GM12878 (cell line): ENCODE measurements at regions of chr3 and their contacts with region 1.

Region 1: DNA sequence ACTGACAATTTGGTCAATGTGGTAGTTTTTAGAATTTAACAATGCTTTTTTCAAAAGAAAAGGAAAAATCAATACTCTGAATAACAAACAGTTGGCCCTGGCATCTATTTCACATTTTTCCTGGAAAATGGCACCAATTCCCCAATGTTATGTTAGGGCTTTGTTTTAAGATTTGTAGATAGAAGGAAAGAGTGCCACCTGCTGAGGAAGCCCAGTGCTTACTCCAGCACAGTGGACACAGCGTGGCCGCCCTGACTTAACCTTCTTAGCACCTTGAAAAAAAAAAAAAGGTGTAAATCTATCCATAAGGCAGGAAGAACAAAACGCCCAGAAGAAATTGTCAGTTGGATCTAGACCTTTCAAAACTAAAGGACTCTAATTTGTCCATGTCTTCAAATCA is 110.7 kb upstream of the CNTN4 start:
- DNase-seq: no peak
- ATAC-seq: peak; percentile 70
- H3K4me3 ChIP-seq: no peak overlapping the region
- H3K27ac ChIP-seq: no peak overlapping the region
- H3K4me1 ChIP-seq: no peaks in the 10 kb centered on the region
- H3K27me3 ChIP-seq: no peaks in the 10 kb centered on the region
- CTCF ChIP-seq: peak in 2 of 3 experiments; percentile 25 to 36; a peak in 2 of 6 replicates
- EP300 ChIP-seq: no peak
- POLR2A ChIP-seq: no peak
- RAD21 ChIP-seq: no peak

Region 2: DNA sequence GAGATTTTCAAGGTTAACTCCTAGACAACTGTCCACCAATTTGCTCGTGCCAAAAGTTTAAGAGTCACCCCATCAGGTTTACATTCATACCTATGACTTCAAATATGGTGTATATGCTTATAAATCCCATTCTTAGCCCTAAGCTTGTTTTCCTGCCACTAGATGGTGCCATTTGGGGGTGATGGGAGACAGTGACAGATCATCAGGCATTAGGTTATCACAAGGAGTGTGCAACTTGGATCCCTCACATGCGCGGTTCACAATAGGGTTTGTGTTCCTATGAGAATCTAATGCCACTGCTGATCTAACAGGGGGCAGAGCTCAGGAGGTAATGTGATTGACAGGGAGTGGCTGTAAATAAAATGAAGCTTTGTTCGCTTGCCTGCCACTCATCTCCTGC is 712.5 kb before region 1 on chr3:
- CTCF ChIA-PET with region 1: no interaction called
- POLR2A ChIA-PET with region 1: no interaction called
- RAD21 ChIA-PET with region 1: no interaction called
- SMC1A ChIA-PET with region 1: no interaction called
- in situ Hi-C with region 1: no loop called
- intact Hi-C with region 1: loop called (anchors 10 kb)
- DNase-seq: no peak
- ATAC-seq: peak; percentile 71
- H3K4me3 ChIP-seq: no peak overlapping the region
- H3K27ac ChIP-seq: no peak overlapping the region
- H3K4me1 ChIP-seq: no peaks in the 10 kb centered on the region
- H3K27me3 ChIP-seq: no peaks in the 10 kb centered on the region
- CTCF ChIP-seq: peak; percentile 35 to 53 (median 39); a peak in 4 of 6 replicates
- EP300 ChIP-seq: no peak
- POLR2A ChIP-seq: no peak
- RAD21 ChIP-seq: peak; percentile 46

Region 3: GRCh38 chr3:1561427-1561826 is 426.6 kb before region 1 on chr3:
- CTCF ChIA-PET with region 1: no interaction called
- POLR2A ChIA-PET with region 1: no interaction called
- RAD21 ChIA-PET with region 1: no interaction called
- SMC1A ChIA-PET with region 1: no interaction called
- in situ Hi-C with region 1: no loop called
- intact Hi-C with region 1: no loop called
- DNase-seq: no peak
- ATAC-seq: no peak
- H3K4me3 ChIP-seq: no peak overlapping the region
- H3K27ac ChIP-seq: no peak overlapping the region
- H3K4me1 ChIP-seq: no peaks in the 10 kb centered on the region
- H3K27me3 ChIP-seq: no peaks in the 10 kb centered on the region
- CTCF ChIP-seq: no peak
- EP300 ChIP-seq: no peak
- POLR2A ChIP-seq: no peak
- RAD21 ChIP-seq: no peak

Region 4: DNA sequence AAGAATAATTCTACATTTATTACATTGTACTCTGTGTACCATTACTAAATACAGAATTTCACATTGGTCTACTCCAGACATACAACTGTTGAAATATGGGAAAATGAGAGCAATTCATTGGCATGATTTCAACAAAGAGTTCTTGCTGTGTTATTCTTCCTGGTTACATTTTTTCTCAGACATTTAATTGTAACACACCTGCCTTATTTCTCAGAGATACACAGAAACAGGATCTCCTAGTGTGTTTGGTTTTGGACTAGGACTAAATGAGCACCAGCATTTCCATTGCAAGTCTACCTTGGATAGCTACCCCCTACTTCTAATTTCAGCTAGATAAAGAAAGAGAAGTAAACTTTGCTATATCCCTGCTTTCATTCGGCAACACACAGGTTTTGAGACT is 163.6 kb before region 1 on chr3:
- CTCF ChIA-PET with region 1: no interaction called
- POLR2A ChIA-PET with region 1: no interaction called
- RAD21 ChIA-PET with region 1: no interaction called
- SMC1A ChIA-PET with region 1: no interaction called
- in situ Hi-C with region 1: no loop called
- intact Hi-C with region 1: no loop called
- DNase-seq: no peak
- ATAC-seq: no peak
- H3K4me3 ChIP-seq: no peak overlapping the region
- H3K27ac ChIP-seq: no peak overlapping the region
- H3K4me1 ChIP-seq: no peaks in the 10 kb centered on the region
- H3K27me3 ChIP-seq: no peaks in the 10 kb centered on the region
- CTCF ChIP-seq: no peak
- EP300 ChIP-seq: no peak
- POLR2A ChIP-seq: no peak
- RAD21 ChIP-seq: no peak